Activated CD4-positive, alpha-beta memory T cell treated with anti-CD3 and anti-CD28 coated beads, Interleukin-2, amount 10 ng/mL, durations not matched to agents 7 days and 5 days (primary cell): ENCODE measurements at regions of chr20 and their contacts with region 1.

Region 1: GRCh38 chr20:33719989-33720709 is at the start of gene PXMP4:
- DNase-seq: peak; percentile 93
- H3K4me3 Mint-ChIP-seq: peak within 1 kb of the TSS; percentile 85
- H3K27ac Mint-ChIP-seq: peak within 1 kb of the TSS; percentile 59
- H3K4me1 Mint-ChIP-seq: peaks cover 28% of the 10 kb centered on the region
- H3K27me3 Mint-ChIP-seq: no peaks in the 10 kb centered on the region
- total RNA-seq, gene PXMP4: 13.9 to 15.8 TPM

Region 2: DNA sequence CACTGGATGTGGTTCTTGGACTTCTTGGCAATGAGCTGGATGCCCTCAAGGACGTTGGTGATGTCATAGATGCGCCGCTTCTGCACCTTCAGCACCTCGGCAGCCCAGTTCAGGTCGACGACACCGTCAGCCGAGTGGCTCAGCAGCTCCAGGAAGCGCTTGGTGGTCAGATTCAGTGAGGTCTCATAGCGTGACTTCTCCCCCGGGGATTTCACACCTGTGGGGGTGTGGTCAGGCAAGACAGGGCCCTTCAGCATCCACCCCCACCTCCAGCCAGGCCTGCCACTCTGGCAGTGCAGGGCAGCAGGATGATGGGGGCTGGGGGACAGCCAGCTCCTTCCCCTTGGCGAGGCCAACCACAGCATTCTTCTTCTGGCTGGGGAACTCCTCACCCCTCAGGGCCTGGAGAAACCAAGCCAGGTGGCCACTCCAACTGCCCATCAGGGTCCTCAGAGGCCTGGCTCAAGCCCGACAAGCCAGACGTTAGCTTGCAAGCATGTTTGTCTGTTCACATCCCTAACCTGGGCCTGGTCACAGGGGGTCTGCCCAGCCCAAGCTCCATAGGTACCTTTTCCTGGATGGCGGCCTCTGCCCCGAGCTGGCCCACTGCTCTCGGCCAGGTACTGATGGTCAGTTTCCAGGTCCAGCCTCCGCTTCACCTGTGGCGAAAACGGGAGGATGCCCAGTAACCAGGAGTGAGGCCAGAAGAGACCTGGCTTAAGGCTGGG is 40.2 kb before region 1 on chr20:
- CTCF ChIA-PET with region 1: interaction called, 7 read pairs
- POLR2A ChIA-PET with region 1: interaction called, 20 read pairs
- DNase-seq: peak; percentile 78
- H3K4me3 Mint-ChIP-seq: no peak overlapping the region
- H3K27ac Mint-ChIP-seq: peak overlapping the region; percentile 90
- H3K4me1 Mint-ChIP-seq: peaks cover 81% of the 10 kb centered on the region
- H3K27me3 Mint-ChIP-seq: no peaks in the 10 kb centered on the region

Region 3: DNA sequence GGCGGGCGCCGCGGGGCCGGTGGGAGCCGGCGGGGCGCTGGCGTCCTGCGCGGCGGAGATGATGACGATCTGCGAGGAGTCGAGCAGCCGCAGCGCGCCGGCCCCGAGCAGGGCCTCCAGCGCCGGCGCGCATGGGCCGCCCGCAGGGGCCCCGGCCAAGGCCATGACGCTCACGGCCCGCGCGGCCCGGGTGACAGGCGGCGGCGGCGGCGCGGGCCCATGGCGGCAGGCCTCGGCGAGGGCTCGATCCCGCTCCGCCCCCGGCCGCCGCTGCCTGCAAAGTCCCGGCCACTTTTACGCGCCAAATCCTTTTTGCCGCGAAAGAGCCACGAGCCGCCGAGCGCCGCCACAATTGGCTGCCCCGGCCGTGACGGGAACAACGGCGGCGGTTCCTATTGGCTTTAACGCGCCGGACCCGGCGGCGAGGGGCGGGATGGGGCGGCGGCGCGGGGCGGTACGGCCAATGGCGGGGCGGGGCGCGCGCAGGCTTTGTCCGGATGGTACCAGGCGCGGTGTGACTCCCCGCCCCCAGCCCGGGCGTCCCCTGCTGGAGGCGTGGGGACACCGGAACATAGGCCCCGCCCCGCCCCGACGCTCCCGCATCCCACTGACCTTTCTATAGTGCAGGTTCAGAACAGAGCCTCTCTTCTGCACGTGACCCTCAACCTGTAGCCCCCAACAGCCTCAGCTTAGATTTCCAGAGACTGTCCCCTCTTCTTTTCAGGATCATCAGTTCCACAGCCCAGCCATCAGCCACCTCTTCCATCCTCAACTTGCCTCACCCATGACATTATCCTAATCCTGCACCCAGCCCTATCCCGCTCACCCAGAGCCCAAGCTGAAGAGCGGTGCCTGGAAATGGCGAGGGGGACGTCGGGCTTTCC is 33.8 kb before region 1 on chr20 and contains the start of gene E2F1:
- CTCF ChIA-PET with region 1: interaction called, 7 read pairs
- POLR2A ChIA-PET with region 1: interaction called, 37 read pairs
- DNase-seq: peak; percentile 98
- H3K4me3 Mint-ChIP-seq: peak within 1 kb of the TSS; percentile 94
- H3K27ac Mint-ChIP-seq: peak within 1 kb of the TSS; percentile 94
- H3K4me1 Mint-ChIP-seq: peaks cover 81% of the 10 kb centered on the region
- H3K27me3 Mint-ChIP-seq: no peaks in the 10 kb centered on the region
- total RNA-seq, gene E2F1: 60.0 to 61.7 TPM